ENCODE measurements at regions of chr20 and their contacts with region 1.

Region 1: DNA sequence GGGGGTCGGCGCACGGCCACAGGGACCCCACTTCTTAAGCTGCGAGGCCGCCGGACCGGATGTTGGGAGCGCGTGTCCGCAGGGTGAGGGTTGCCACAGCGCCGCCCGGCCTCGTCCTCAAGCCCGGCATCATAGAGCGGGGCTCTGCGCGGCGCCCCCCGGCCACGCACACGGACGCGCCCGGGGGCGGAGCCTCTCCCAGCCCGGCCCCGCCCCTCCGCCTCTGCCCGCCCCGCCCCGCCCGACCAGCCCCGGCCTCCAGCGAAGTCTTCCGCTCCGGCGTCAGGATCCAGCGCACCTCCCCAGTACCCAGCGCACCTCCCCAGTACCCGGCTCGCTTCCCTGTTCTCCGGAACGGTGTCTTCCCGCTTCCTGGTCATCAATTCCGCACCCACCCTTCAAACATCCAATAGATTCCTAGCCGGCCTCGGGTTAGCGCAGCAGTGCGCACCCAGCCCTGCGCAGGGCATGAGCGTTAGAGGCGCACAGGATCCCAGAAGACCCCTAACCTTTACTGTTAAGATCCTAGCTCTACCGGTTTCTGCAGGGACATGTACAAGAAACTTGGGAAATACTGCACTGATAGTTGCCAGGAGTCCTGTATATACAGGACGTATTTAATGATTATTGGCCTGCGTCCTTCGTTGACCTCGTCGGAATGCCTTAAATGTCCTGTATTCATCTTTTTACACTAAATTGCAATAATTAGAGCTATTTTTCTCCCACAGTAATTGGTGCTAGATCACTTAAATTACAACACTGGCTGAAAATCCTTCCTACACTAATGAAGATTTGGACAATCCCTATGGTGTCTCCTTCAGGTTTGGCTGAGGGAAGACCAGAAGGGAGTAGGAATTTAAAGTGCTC is 535 bp upstream of the DNAAF9 start:
- DNase-seq: peak; percentile 88
- ATAC-seq: peak; percentile 73
- H3K4me3 ChIP-seq: peak overlapping the region; percentile 84 to 99 (median 95)
- H3K4me3 Mint-ChIP-seq: peak overlapping the region; percentile 99
- H3K27ac ChIP-seq: peak overlapping the region in 1 of 2 donors; percentile 48
- H3K27ac Mint-ChIP-seq: peak overlapping the region; percentile 97
- H3K4me1 ChIP-seq: peaks cover 13 to 19% of the 10 kb centered on the region in 2 donors
- H3K4me1 Mint-ChIP-seq: peaks cover 28% of the 10 kb centered on the region
- H3K27me3 ChIP-seq: peaks cover 0 to 1% (median 0%) of the 10 kb centered on the region in 4 experiments
- H3K27me3 Mint-ChIP-seq: peaks cover 4% of the 10 kb centered on the region
- CTCF ChIP-seq: no peak

Region 2: GRCh38 chr20:3209257-3209945 is 198.6 kb before region 1 on chr20 and contains the start of gene ITPA:
- CTCF ChIA-PET with region 1: no interaction called
- POLR2A ChIA-PET with region 1: no interaction called
- intact Hi-C with region 1: loop called (anchors 2 kb)
- DNase-seq: peak; percentile 70
- ATAC-seq: peak; percentile 37
- H3K4me3 ChIP-seq: peak within 1 kb of the TSS; percentile 62 to 99 (median 87)
- H3K4me3 Mint-ChIP-seq: peak within 1 kb of the TSS; percentile 88
- H3K27ac ChIP-seq: peak within 1 kb of the TSS; percentile 77 to 91
- H3K27ac Mint-ChIP-seq: peak within 1 kb of the TSS; percentile 88
- H3K4me1 ChIP-seq: peaks cover 14 to 17% of the 10 kb centered on the region in 2 donors
- H3K4me1 Mint-ChIP-seq: peaks cover 20% of the 10 kb centered on the region
- H3K27me3 ChIP-seq: no peaks in the 10 kb centered on the region
- H3K27me3 Mint-ChIP-seq: no peaks in the 10 kb centered on the region
- CTCF ChIP-seq: no peak
- total RNA-seq, gene ITPA: 55.5 TPM in 2 replicates

Region 3: DNA sequence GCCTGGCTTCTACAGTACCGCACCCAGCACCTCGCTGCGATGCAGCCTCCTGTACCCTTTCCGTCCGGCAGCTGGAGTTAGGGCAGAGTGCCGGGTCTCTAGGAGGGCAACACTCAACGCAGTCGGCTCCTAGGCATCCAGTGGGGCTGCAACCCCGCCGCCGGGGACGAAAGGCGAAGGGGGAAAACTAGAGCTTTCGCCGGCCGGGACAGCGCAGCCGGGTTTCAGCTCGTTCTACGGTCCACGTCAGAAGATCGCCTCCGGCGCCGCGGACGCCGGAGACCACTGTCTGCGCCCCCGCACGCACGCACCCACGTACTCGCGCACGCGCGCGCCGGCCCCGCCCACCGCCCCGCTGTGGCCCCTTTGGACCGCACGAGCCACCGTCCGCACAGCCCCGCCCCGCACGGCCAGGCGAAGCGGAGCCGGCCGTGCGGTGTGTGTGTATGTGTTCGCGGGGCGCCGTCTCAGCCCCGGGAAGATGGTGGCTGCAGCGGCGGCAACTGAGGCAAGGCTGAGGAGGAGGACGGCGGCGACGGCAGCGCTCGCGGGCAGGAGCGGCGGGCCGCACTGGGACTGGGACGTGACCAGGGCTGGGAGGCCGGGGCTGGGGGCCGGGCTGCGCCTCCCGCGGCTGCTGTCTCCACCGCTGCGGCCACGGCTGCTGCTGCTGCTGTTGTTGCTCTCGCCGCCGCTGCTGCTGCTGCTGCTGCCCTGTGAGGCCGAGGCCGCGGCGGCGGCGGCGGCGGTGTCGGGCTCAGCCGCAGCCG is 62.8 kb after region 1 on chr20 and contains the start of gene ATRN:
- CTCF ChIA-PET with region 1: interaction called, 4 read pairs
- POLR2A ChIA-PET with region 1: interaction called, 8 read pairs
- intact Hi-C with region 1: loop called (anchors 1 kb)
- DNase-seq: peak; percentile 94
- ATAC-seq: peak; percentile 92
- H3K4me3 ChIP-seq: peak within 1 kb of the TSS; percentile 49 to 88 (median 72)
- H3K4me3 Mint-ChIP-seq: peak within 1 kb of the TSS; percentile 90
- H3K27ac ChIP-seq: peak within 1 kb of the TSS; percentile 46 to 72
- H3K27ac Mint-ChIP-seq: peak within 1 kb of the TSS; percentile 88
- H3K4me1 ChIP-seq: peaks cover 25 to 35% of the 10 kb centered on the region in 2 donors
- H3K4me1 Mint-ChIP-seq: peaks cover 36% of the 10 kb centered on the region
- H3K27me3 ChIP-seq: peaks cover 0 to 2% (median under 1%) of the 10 kb centered on the region in 4 experiments
- H3K27me3 Mint-ChIP-seq: peaks cover 6% of the 10 kb centered on the region
- CTCF ChIP-seq: no peak
- total RNA-seq, gene ATRN: 18.3 and 19.5 TPM in 2 replicates

Measured in B cell (primary cell).